Heart left ventricle (tissue), 16 donors: ENCODE measurements at regions of chr12 and their contacts with region 1.

Region 1: DNA sequence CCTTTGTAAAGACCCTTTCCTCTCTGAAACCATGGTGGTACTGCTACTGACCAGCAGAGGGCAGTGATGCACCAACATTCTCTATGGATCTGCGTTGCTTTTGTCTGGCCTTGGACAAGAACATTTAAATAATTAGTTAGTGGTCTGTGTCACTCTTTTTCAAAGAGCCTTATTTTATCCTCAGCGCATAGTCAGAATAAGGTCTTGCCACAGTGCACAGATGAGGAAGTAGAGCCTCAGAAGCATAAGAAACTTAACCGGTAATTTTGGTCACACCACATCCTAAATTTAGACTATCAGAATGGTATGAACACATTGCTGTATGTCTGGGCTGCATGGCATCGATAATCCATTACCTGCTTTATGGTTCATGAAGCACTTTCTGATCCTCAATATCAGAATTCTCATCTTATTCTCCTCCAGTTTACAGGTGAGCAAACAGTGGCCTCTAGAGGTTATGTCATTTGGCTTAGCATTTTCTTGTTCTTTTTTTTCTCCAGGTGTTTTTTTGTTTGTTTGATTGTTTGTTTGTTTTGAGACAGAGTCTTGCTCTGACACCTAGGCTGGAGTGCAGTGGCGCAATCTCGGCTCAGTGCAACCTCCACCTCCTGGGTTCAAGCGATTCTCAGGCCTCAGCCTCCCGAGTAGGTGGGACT is 23.7 kb upstream of the IFT81 start:
- DNase-seq: peak in 4 of 5 donors; percentile 45 to 66 (median 64)
- ATAC-seq: peak; percentile 40 to 80 (median 70)
- H3K4me3 ChIP-seq: no peak overlapping the region
- H3K27ac ChIP-seq: peak overlapping the region in 3 of 12 donors; percentile 17 to 43 (median 41)
- H3K4me1 ChIP-seq: peaks cover 0 to 16% (median 5%) of the 10 kb centered on the region in 12 donors
- H3K27me3 ChIP-seq: no peaks in the 10 kb centered on the region
- CTCF ChIP-seq: peak; percentile 81 to 96 (median 90)
- POLR2A ChIP-seq: no peak

Region 2: DNA sequence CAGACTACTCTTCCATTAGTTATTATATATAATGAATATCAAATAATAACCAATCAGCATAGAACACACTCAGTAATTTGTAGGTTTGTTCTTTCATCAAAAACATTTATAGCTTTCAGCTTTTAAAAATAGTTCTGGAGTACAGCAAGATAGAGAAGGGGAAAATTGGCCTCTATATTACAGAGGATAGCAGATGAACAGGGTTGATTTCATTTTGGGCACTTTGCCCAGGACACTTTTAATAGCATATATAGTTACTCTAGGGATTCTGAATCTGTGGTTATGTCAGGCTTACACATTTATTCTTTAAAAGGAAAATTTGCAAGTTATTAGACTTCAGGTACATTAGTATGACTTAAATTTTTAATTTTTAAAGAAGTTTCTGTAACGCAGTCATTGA is 76.3 kb after region 1 on chr12:
- intact Hi-C with region 1: loop called in 4 of 10 experiments (anchors 5 to 10 kb)
- DNase-seq: peak in 1 of 5 donors; percentile 11
- ATAC-seq: peak; percentile 47 to 73 (median 64)
- H3K4me3 ChIP-seq: no peak overlapping the region
- H3K27ac ChIP-seq: peak overlapping the region in 7 of 12 donors; percentile 6 to 57 (median 26)
- H3K4me1 ChIP-seq: peaks cover 0 to 39% (median 7%) of the 10 kb centered on the region in 12 donors
- H3K27me3 ChIP-seq: no peaks in the 10 kb centered on the region
- CTCF ChIP-seq: no peak
- POLR2A ChIP-seq: no peak

Region 3: DNA sequence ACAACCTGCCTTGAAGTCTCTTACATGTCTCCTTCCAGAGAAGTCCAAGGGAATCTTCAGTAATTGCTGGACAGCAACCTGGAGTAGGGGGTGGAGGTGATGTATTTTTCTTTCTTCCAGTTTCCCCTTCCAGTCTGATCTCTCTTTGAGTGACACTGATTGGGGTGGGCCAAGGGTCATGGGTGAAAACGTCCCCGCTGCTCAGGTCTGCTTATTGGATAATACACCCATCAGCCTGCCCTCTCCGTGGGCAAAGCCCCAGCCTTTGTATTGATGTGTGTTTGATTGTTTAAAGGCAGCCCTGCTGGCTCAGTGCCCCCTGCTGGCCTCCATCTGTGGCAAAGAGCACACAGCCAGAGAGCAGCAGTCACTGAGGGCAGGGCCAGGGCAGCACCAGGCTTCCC is 144.9 kb after region 1 on chr12:
- intact Hi-C with region 1: loop called in 3 of 10 experiments (anchors 10 kb)
- DNase-seq: peak in 3 of 5 donors; percentile 77 to 82 (median 80)
- ATAC-seq: peak in 2 of 4 donors; percentile 34 to 52
- H3K4me3 ChIP-seq: no peak overlapping the region
- H3K27ac ChIP-seq: peak overlapping the region; percentile 71 to 97 (median 88)
- H3K4me1 ChIP-seq: peaks cover 0 to 55% (median 40%) of the 10 kb centered on the region in 12 donors
- H3K27me3 ChIP-seq: no peaks in the 10 kb centered on the region
- CTCF ChIP-seq: peak in 9 of 12 donors; percentile 9 to 49 (median 26)
- POLR2A ChIP-seq: no peak

Region 4: DNA sequence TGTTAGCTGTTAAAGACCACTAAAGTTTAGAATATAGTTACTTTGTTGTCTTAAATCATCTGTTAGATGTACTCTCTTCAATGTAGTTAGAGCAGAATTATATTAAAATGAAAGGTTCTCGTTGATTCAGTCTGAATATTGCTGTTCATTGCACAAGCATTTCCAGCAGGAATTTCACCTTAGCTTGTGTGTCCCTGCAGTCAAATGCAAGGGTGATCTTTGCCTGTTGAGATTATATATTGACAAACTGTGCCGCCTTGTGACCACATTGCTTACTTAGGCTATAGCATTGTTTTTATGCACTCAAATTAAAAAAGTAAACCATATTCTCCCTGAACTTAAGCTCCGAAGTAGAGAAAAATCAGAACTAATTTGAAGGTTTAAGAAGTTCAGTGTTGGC is 220.1 kb after region 1 on chr12:
- intact Hi-C with region 1: loop called in 1 of 10 experiments (anchors 10 kb)
- DNase-seq: no peak
- ATAC-seq: no peak
- H3K4me3 ChIP-seq: no peak overlapping the region
- H3K27ac ChIP-seq: peak overlapping the region in 3 of 12 donors; percentile 1 to 6 (median 2)
- H3K4me1 ChIP-seq: peaks cover 5 to 87% (median 43%) of the 10 kb centered on the region in 12 donors
- H3K27me3 ChIP-seq: no peaks in the 10 kb centered on the region
- CTCF ChIP-seq: no peak
- POLR2A ChIP-seq: no peak

Region 5: DNA sequence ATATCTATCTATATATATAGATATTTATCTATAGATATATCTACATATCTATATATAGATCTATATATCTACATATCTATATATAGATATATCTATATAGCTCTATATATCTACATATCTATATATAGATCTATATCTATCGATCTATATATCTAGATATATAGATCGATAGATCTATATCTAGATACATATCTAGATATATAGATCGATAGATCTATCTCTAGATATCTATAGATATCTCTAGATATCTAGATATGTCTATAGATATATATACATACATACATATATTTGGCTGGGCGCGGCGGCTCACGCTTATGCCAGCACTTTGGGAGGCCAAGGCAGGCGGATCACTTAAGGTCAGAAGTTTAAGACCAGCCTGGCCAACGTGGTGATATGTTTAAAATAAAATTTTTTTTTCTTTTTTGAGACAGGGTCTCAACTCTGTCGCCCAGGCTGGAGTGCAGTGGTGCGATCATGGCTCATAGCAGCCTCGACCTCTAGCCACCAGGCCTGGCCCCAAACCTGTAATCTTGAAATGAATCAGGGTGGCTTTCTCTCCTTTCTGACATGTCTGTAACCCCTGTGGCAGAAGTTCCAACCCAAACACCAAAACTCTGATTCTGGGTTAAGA is 331.6 kb after region 1 on chr12:
- intact Hi-C with region 1: loop called in 9 of 10 experiments (anchors 1 to 5 kb)
- DNase-seq: no peak
- ATAC-seq: no peak
- H3K4me3 ChIP-seq: peak overlapping the region in 11 of 12 donors; percentile 27 to 67 (median 56)
- H3K27ac ChIP-seq: peak overlapping the region in 3 of 12 donors; percentile 39 to 62 (median 55)
- H3K4me1 ChIP-seq: peaks cover 0 to 6% (median 0%) of the 10 kb centered on the region in 12 donors
- H3K27me3 ChIP-seq: no peaks in the 10 kb centered on the region
- CTCF ChIP-seq: no peak
- POLR2A ChIP-seq: no peak